ENCODE measurements at regions of chr2 and their contacts with region 1.

Region 1: GRCh38 chr2:9142551-9143263 is 63.9 kb upstream of the ASAP2 start:
- DNase-seq: peak; percentile 97

Region 2: GRCh38 chr2:8872821-8873432 is 269.8 kb before region 1 on chr2:
- intact Hi-C with region 1: loop called in 1 of 2 experiments (anchors 10 kb)
- DNase-seq: no peak

Region 3: GRCh38 chr2:9205963-9206948 is 63.5 kb after region 1 on chr2 and contains the start of gene ASAP2:
- intact Hi-C with region 1: loop called (anchors 10 kb)
- DNase-seq: peak; percentile 90
- total RNA-seq, gene ASAP2: 28.1 to 31.3 TPM

Region 4: GRCh38 chr2:9333591-9334171 is 191.0 kb after region 1 on chr2:
- intact Hi-C with region 1: loop called in 1 of 2 experiments (anchors 5 kb)
- DNase-seq: no peak

Region 5: DNA sequence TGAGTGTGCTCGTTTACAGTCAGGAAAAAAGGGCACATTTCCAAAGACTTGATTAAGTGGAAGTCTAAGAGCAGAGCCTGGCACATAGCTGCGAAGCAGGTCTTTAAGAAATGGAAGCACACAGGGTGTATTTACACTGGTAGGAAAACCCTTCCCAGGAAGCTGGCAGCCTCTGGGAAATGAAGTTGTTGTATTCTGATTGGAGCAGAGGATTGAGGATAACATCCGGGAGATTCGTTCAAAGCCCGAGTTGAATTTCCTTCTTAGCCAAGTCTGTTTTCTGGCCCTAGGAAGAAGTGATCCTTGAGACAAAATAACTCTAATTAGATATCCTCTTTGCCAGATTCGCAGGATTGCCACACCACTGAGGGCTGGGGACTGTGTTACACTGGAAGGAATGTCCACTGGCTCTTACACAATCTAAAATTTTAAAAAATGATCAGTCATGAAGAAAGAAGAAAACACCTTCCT is 204.7 kb after region 1 on chr2:
- intact Hi-C with region 1: loop called in 1 of 2 experiments (anchors 10 kb)
- DNase-seq: peak; percentile 92

Region 6: GRCh38 chr2:9423100-9423921 is 280.6 kb after region 1 on chr2 and contains the starts of genes CPSF3 and ITGB1BP1:
- intact Hi-C with region 1: loop called (anchors 5 to 10 kb)
- DNase-seq: peak; percentile 99
- total RNA-seq, gene CPSF3: 18.2 to 18.7 TPM
- total RNA-seq, gene ITGB1BP1: 100 to 143 TPM

Measured in posterior vena cava (tissue), 2 donors.